PC-9 (cell line): ENCODE measurements at regions of chr5 and their contacts with region 1.

Region 1: DNA sequence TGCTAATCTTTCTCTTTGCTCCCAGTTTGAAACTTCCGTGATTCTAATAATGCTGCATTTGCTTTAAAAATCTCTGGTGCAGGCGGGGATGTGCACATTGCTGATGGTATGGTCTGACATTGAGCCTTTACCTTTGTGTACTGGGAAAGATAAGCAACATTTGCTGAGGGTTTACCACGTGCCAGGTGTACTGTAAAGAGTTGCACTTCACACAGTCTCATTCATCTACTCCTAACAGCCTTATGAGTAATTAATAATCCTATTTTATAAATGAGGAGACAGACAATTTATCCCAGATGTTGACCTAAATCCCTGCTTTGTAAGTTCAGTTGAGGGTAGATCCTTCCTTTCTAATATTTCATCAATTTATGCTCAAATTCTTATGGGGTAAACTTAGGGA is 726 bp upstream of the ADGRV1 start:
- DNase-seq: no peak
- H3K4me3 ChIP-seq: peak overlapping the region; percentile 54
- H3K27ac ChIP-seq: no peak overlapping the region
- H3K4me1 ChIP-seq: 0 out of 2 replicates have a peak, but pooled peaks cover 4% of the 10 kb centered on the region
- H3K27me3 ChIP-seq: peaks cover 50% of the 10 kb centered on the region
- CTCF ChIP-seq: no peak

Region 2: DNA sequence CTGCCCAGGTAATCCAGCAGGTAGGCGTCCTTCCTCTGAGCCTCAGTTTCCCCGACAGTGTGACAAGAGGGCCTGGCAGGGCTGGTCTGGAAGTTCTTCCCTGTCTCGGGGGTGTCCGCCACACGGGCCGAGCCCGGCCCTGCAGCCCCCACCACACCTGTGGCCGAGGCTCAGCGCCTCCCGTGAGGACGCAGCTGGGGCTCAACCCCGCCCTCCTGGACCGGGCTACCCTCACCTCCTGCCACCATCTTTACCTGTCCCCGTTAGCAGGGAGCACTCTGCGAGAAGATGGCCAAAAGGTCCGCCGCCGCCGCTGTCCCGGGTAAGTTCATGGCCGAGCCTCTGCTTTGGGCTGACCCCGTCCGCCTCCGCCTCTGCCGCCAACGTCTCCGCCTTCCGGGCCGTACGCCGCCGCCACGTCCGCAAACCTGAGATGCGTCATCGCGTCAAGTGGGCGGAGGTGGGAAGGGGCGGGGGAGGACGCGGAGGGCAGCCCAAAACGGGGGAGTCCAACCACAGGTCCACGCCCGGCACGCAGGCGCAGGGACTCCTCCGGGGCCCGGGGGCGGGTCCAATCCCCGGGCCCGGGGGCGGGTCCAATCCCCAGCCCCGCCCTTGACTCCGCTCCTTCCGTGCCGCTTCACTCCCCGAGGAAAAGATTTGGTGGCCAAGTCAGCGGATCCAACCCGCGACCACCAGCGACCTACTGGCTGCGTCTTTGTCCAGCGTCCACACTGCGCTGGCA is 28.5 kb before region 1 on chr5 and contains the start of gene LYSMD3:
- CTCF ChIA-PET with region 1: no interaction called
- POLR2A ChIA-PET with region 1: no interaction called
- intact Hi-C with region 1: loop called (anchors 2 kb)
- DNase-seq: peak; percentile 91 to 95
- H3K4me3 ChIP-seq: peak within 1 kb of the TSS; percentile 82
- H3K27ac ChIP-seq: peak within 1 kb of the TSS; percentile 54
- H3K4me1 ChIP-seq: peaks cover 15% of the 10 kb centered on the region
- H3K27me3 ChIP-seq: peaks cover 4% of the 10 kb centered on the region; the same call in 1 of the 2 replicates
- CTCF ChIP-seq: no peak
- total RNA-seq, gene LYSMD3: 4.6 and 10.6 TPM in 2 replicates